ENCODE measurements at regions of chr17 and their contacts with region 1.

Region 1: GRCh38 chr17:27760069-27760885 is 40.1 kb downstream of the NOS2 start:
- DNase-seq: peak; percentile 55
- H3K4me3 ChIP-seq: no peak overlapping the region
- H3K27ac ChIP-seq: no peak overlapping the region
- H3K4me1 ChIP-seq: no peaks in the 10 kb centered on the region
- H3K27me3 ChIP-seq: no peaks in the 10 kb centered on the region
- CTCF ChIP-seq: peak; percentile 94

Region 2: GRCh38 chr17:27236717-27237315 is 523.5 kb before region 1 on chr17:
- CTCF ChIA-PET with region 1: no interaction called
- POLR2A ChIA-PET with region 1: no interaction called
- intact Hi-C with region 1: loop called (anchors 10 kb)
- DNase-seq: peak; percentile 71
- H3K4me3 ChIP-seq: no peak overlapping the region
- H3K27ac ChIP-seq: no peak overlapping the region
- H3K4me1 ChIP-seq: peaks cover 2% of the 10 kb centered on the region
- H3K27me3 ChIP-seq: no peaks in the 10 kb centered on the region
- CTCF ChIP-seq: peak; percentile 91

Region 3: GRCh38 chr17:27654654-27655524 is 105.4 kb before region 1 on chr17:
- CTCF ChIA-PET with region 1: interaction called, 15 read pairs
- POLR2A ChIA-PET with region 1: no interaction called
- intact Hi-C with region 1: loop called (anchors 1 kb)
- DNase-seq: peak; percentile 77
- H3K4me3 ChIP-seq: no peak overlapping the region
- H3K27ac ChIP-seq: no peak overlapping the region
- H3K4me1 ChIP-seq: no peaks in the 10 kb centered on the region
- H3K27me3 ChIP-seq: no peaks in the 10 kb centered on the region
- CTCF ChIP-seq: peak; percentile 95

Region 4: DNA sequence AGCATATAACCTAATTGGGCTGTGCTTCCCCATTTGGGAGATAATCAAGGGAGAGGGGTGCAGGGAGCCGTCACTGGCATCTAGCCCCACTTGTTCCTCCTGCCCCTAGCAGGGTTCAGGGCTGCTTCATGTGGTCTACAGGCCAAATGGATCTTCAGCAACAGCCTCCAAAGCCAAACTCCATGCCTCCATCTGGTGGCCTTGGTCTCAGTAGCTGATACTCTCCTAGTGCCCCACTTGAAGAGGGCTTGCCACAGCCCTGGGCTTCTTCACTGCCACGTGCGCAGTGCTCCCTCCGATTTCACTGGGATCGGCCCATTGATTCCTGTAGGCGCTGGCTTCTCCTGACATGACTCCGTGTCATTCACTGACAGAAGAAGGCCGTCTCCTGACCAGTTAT is 108.3 kb after region 1 on chr17:
- CTCF ChIA-PET with region 1: no interaction called
- POLR2A ChIA-PET with region 1: no interaction called
- intact Hi-C with region 1: no loop called
- DNase-seq: no peak
- H3K4me3 ChIP-seq: no peak overlapping the region
- H3K27ac ChIP-seq: no peak overlapping the region
- H3K4me1 ChIP-seq: no peaks in the 10 kb centered on the region
- H3K27me3 ChIP-seq: no peaks in the 10 kb centered on the region
- CTCF ChIP-seq: no peak

Region 5: DNA sequence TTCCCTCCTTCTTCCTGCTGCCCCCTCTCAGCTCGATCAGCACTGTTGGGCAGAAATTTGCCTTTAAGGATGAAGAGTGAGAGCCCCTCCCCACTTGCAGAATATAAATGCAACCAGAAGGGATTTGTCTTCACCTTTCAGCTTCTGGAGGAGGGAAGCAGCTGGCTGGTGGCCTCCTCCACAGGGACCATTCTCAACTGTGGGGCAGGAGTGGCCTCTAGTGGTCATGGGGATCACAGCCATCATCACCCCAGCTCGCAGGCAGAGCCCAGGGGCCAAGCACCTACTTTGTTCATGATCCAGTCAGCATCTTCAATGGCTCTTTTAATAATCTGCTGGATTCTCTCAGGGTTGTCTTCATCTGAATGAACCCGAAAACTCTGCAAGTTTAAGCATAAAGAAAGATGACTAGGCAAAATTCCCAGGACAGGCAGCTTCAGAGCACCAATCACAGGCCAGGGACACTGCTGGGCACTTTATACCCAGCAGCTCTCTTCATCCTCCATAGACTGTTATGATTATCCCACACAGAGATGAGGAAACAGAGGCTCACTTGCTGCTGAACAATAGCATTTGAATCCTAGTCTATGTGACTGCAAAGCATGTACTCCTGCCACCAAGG is 119.8 kb after region 1 on chr17:
- CTCF ChIA-PET with region 1: interaction called, 33 read pairs
- POLR2A ChIA-PET with region 1: no interaction called
- intact Hi-C with region 1: loop called (anchors 1 kb)
- DNase-seq: peak; percentile 71
- H3K4me3 ChIP-seq: no peak overlapping the region
- H3K27ac ChIP-seq: no peak overlapping the region
- H3K4me1 ChIP-seq: no peaks in the 10 kb centered on the region
- H3K27me3 ChIP-seq: no peaks in the 10 kb centered on the region
- CTCF ChIP-seq: peak; percentile 79

Region 6: GRCh38 chr17:28252436-28252835 is 492.2 kb after region 1 on chr17:
- CTCF ChIA-PET with region 1: interaction called, 3 read pairs
- POLR2A ChIA-PET with region 1: no interaction called
- intact Hi-C with region 1: loop called (anchors 5 kb)
- DNase-seq: no peak
- H3K4me3 ChIP-seq: no peak overlapping the region
- H3K27ac ChIP-seq: no peak overlapping the region
- H3K4me1 ChIP-seq: no peaks in the 10 kb centered on the region
- H3K27me3 ChIP-seq: no peaks in the 10 kb centered on the region
- CTCF ChIP-seq: no peak